PC-9 (cell line): ENCODE measurements at regions of chr14 and their contacts with region 1.

Region 1: GRCh38 chr14:52700701-52701172 is 5.4 kb upstream of the ERO1A start:
- DNase-seq: peak in 1 of 2 experiments; percentile 98
- H3K4me3 ChIP-seq: peak overlapping the region; percentile 11; the same call in 1 of the 2 replicates
- H3K27ac ChIP-seq: peak overlapping the region; percentile 98
- H3K4me1 ChIP-seq: peaks cover 51% of the 10 kb centered on the region
- H3K27me3 ChIP-seq: no peaks in the 10 kb centered on the region
- CTCF ChIP-seq: no peak

Region 2: GRCh38 chr14:52552063-52552988 is 148.4 kb before region 1 on chr14 and contains the starts of genes GPR137C and TXNDC16:
- CTCF ChIA-PET with region 1: interaction called, 7 read pairs
- POLR2A ChIA-PET with region 1: no interaction called
- intact Hi-C with region 1: loop called (anchors 2 kb)
- DNase-seq: peak; percentile 96 to 99
- H3K4me3 ChIP-seq: peak within 1 kb of the TSS; percentile 65
- H3K27ac ChIP-seq: peak within 1 kb of the TSS; percentile 33; the same call in 1 of the 2 replicates
- H3K4me1 ChIP-seq: peaks cover 21% of the 10 kb centered on the region
- H3K27me3 ChIP-seq: no peaks in the 10 kb centered on the region
- CTCF ChIP-seq: no peak
- total RNA-seq, gene GPR137C: 1.1 and 1.2 TPM in 2 replicates
- total RNA-seq, gene TXNDC16: 5.7 and 7.9 TPM in 2 replicates

Region 3: DNA sequence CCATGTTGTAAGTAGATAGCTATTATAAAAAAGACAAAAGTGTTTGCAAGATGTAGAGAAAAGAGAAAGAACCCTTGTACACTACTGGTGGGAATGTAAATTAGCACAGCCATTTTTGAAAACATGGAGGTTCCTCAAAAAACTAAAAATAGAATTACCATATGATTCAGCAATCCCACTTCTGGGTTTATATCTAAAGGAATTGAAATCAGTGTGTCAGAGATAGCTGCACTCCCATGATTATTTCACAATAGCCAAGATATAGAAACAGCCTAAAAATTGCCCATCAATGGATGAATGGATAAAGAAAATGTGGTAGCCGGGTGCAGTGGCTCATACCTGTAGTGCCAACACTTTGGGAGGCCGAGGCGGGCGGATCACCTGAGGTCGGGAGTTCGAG is 15.4 kb after region 1 on chr14:
- CTCF ChIA-PET with region 1: no interaction called
- POLR2A ChIA-PET with region 1: no interaction called
- intact Hi-C with region 1: no loop called
- DNase-seq: no peak
- H3K4me3 ChIP-seq: no peak overlapping the region
- H3K27ac ChIP-seq: no peak overlapping the region
- H3K4me1 ChIP-seq: no peaks in the 10 kb centered on the region
- H3K27me3 ChIP-seq: no peaks in the 10 kb centered on the region
- CTCF ChIP-seq: no peak

Region 4: GRCh38 chr14:52767058-52767833 is 66.5 kb after region 1 on chr14:
- CTCF ChIA-PET with region 1: no interaction called
- POLR2A ChIA-PET with region 1: interaction called, 11 read pairs
- intact Hi-C with region 1: no loop called
- DNase-seq: no peak
- H3K4me3 ChIP-seq: no peak overlapping the region
- H3K27ac ChIP-seq: no peak overlapping the region
- H3K4me1 ChIP-seq: no peaks in the 10 kb centered on the region
- H3K27me3 ChIP-seq: no peaks in the 10 kb centered on the region
- CTCF ChIP-seq: no peak